ENCODE measurements at regions of chr7 and their contacts with region 1.

Region 1: DNA sequence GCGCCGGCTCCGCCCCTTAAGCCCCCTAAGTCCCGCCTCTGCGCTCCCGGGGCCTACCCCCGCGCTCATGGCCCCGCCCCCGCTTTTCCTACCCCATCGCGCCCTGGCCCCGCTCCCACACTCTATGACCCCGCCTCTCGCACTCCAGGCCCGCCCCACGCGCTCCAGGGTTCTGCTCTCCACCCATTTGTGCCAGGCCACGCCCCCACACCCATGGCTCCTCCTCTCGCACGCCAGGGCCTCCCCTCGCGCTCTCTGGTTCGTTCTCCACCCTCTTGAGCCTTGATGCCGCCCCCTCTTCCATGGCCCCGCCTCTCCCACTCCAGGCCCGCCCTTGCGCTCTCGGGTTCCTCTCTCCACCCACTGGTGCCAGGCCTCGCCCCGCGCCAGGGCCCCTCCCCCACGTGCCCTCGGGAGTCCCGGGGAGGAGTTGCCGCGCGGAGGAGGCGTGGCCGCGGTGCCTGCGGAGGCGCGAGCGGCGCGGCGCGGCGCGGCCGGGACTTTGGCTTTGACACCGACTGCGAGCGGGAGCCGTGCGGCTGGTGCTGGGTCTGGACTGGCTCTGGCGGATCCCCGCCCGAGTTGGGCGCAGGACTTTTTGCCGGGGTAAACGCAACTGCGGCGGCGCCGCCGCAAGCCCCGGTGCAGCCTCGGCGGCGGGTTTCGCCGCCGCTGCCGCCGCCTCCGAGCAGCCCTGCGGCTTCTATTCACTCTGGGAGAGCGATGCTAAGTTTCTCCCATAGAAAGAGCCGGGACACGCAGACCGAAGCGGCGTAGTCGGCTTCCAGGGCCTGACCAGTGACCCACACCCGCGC is at the start of gene EEPD1:
- DNase-seq: peak; percentile 99
- ATAC-seq: peak; percentile 96
- H3K4me3 ChIP-seq: peak within 1 kb of the TSS; percentile 60
- H3K27ac ChIP-seq: peak within 1 kb of the TSS; percentile 49
- H3K4me1 ChIP-seq: peaks cover 16% of the 10 kb centered on the region
- H3K27me3 ChIP-seq: no peaks in the 10 kb centered on the region
- CTCF ChIP-seq: no peak
- POLR2A ChIP-seq: no peak
- RAD21 ChIP-seq: no peak
- total RNA-seq, gene EEPD1: 7.3 and 8.1 TPM in 2 replicates

Region 2: GRCh38 chr7:36192053-36192824 is 39.3 kb after region 1 on chr7:
- CTCF ChIA-PET with region 1: no interaction called
- POLR2A ChIA-PET with region 1: no interaction called
- dilution Hi-C with region 1: no loop called
- in situ Hi-C with region 1: no loop called
- intact Hi-C with region 1: loop called (anchors 5 kb)
- DNase-seq: peak; percentile 98
- ATAC-seq: peak; percentile 64
- H3K4me3 ChIP-seq: no peak overlapping the region
- H3K27ac ChIP-seq: peak overlapping the region; percentile 83
- H3K4me1 ChIP-seq: peaks cover 32% of the 10 kb centered on the region
- H3K27me3 ChIP-seq: no peaks in the 10 kb centered on the region
- CTCF ChIP-seq: 0 out of 2 replicates have a peak, but pooled peaks have one; percentile 22
- POLR2A ChIP-seq: no peak; the same call in 1 of the 2 replicates
- RAD21 ChIP-seq: peak; percentile 35; the same call in 1 of the 2 replicates

Region 3: GRCh38 chr7:36207451-36208291 is 54.7 kb after region 1 on chr7:
- CTCF ChIA-PET with region 1: no interaction called
- POLR2A ChIA-PET with region 1: no interaction called
- dilution Hi-C with region 1: no loop called
- in situ Hi-C with region 1: no loop called
- intact Hi-C with region 1: loop called (anchors 5 kb)
- DNase-seq: peak; percentile 96
- ATAC-seq: peak; percentile 60
- H3K4me3 ChIP-seq: no peak overlapping the region
- H3K27ac ChIP-seq: peak overlapping the region; percentile 99
- H3K4me1 ChIP-seq: peaks cover 61% of the 10 kb centered on the region
- H3K27me3 ChIP-seq: no peaks in the 10 kb centered on the region
- CTCF ChIP-seq: 0 out of 2 replicates have a peak, but pooled peaks have one; percentile 14
- POLR2A ChIP-seq: no peak
- RAD21 ChIP-seq: peak; percentile 11; the same call in 1 of the 2 replicates

Region 4: DNA sequence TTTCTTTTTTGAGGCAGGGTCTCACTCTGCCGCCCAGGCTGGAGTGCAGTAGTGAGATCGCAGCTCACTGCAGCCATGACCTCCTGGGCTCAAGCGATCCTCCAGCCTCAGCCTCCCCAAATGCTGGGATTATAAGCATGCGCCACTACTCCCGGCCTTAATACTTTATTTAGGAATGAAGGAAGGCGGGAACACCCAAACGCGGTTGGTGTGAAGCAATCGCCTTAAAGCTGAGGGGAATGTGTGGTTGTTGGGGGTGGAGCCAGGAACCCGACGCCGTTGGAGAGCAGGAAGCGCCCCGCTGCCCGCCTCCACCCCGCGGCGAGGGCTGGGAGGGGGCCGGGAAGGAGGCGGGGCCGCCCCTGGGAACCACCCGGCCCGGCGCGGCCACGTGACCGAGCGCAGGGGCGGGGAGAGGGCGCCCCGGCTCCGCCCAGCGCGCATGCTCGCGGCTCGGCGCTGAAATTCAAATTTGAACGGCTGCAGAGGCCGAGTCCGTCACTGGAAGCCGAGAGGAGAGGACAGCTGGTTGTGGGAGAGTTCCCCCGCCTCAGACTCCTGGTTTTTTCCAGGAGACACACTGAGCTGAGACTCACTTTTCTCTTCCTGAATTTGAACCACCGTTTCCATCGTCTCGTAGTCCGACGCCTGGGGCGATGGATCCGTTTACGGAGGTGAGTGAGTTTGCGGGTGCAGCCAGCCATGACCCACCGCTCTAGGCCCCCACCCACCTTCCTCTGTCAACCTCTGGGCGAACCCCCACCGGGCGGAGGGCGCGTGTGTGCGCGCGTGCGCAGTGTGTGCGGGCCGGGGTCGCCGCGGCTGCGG is 236.6 kb after region 1 on chr7 and contains the start of gene ANLN:
- CTCF ChIA-PET with region 1: no interaction called
- POLR2A ChIA-PET with region 1: no interaction called
- dilution Hi-C with region 1: no loop called
- in situ Hi-C with region 1: no loop called
- intact Hi-C with region 1: no loop called
- DNase-seq: peak; percentile 89
- ATAC-seq: peak; percentile 88
- H3K4me3 ChIP-seq: peak within 1 kb of the TSS; percentile 58
- H3K27ac ChIP-seq: peak within 1 kb of the TSS; percentile 72
- H3K4me1 ChIP-seq: peaks cover 9% of the 10 kb centered on the region
- H3K27me3 ChIP-seq: no peaks in the 10 kb centered on the region
- CTCF ChIP-seq: no peak
- POLR2A ChIP-seq: peak; percentile 74; the same call in 1 of the 2 replicates
- RAD21 ChIP-seq: no peak
- total RNA-seq, gene ANLN: 209 and 276 TPM in 2 replicates

Measured in IMR-90 (cell line).